ENCODE measurements at regions of chr2 and their contacts with region 1.

Region 1: DNA sequence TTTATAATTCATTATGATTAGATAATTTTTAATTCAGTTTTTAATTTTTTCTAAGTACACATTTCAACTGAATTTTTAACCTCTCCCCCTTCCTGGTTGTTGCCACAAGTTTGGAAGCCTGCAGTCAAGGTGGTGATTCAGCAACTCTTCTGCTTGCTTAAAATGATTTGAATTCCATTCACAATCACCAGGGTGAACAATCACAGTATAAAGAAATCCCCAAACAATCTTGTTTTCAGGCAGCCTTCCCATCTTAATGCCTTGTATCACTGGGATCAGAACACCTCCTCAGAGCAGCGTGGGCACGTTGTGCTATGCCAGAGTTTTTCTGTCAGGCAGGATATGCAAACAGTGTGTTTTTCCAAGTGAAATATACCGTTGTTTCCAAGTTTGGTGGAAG is 46.7 kb upstream of the BARD1 start:
- DNase-seq: no peak
- ATAC-seq: no peak
- H3K4me3 ChIP-seq: no peak overlapping the region
- H3K27ac ChIP-seq: no peak overlapping the region
- H3K4me1 ChIP-seq: no peaks in the 10 kb centered on the region
- H3K27me3 ChIP-seq: no peaks in the 10 kb centered on the region
- CTCF ChIP-seq: no peak

Region 2: DNA sequence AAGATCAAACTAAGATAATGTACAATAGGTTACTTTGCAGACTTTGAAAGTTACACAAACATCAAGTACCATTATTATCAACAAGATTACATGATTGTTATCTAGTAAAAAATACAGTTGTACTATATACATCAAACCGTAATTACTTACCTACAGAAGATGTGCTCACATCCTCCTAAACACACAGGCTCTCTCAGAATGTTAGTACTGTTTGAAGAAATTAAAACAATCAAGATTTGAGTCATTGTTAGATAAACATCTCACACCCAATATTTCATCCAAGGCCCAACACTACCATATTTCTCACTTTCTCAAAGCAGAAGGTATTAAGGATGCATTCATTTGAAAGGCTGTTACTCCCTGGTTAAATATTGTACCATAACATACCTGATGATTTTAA is 59.2 kb before region 1 on chr2:
- CTCF ChIA-PET with region 1: no interaction called
- POLR2A ChIA-PET with region 1: interaction called, 10 read pairs
- in situ Hi-C with region 1: no loop called
- intact Hi-C with region 1: no loop called
- DNase-seq: no peak
- ATAC-seq: no peak
- H3K4me3 ChIP-seq: no peak overlapping the region
- H3K27ac ChIP-seq: no peak overlapping the region
- H3K4me1 ChIP-seq: no peaks in the 10 kb centered on the region
- H3K27me3 ChIP-seq: no peaks in the 10 kb centered on the region
- CTCF ChIP-seq: no peak

Measured in Panc1 (cell line).